Caco-2 (cell line): ENCODE measurements at regions of chr19 and their contacts with region 1.

Region 1: DNA sequence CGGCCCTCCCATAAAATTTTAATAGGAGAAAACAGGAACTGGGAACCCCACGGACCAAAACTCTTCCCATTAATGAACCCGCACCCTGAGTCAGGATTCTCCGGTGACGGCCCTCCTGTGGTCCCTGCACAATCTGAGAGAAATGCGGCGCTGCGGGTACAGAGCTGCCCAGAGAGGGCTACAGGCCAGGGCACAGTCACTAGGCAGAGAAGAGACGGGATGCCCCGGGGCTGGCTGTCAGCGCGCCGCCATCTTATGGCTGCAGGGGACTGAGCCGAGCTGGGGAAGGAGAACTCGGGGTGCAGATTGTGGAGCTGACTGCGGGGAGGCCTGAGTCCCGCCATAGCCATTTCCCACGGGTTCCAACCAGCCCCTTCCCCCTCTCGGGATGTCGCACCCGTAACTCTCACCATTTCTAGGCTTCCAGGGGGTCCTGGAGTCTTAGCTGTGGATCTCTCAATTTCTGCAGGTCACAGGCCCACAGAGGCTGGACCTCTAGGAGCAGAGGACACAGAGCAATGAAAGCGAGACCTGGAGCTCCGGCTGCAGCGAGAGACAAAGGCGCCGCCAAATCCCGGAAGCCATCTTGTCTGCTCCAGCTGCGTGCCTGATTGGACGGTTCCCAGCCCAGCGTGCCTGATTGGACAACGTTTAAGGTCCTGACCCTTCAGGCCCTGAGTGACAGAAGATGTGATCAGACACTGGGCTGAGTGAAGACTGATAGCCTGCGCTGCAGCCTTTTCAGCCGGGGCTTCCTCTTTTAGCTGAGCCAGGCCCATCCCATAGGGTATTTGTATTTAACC is at the start of gene ZNF675:
- DNase-seq: peak; percentile 88 to 93
- H3K4me3 ChIP-seq: peak within 1 kb of the TSS; percentile 94
- H3K4me3 Mint-ChIP-seq: peak within 1 kb of the TSS; percentile 96
- H3K27ac Mint-ChIP-seq: peak within 1 kb of the TSS; percentile 97
- H3K4me1 ChIP-seq: 0 out of 2 replicates have a peak, but pooled peaks cover 3% of the 10 kb centered on the region
- H3K4me1 Mint-ChIP-seq: no peaks in the 10 kb centered on the region
- H3K27me3 ChIP-seq: no peaks in the 10 kb centered on the region
- H3K27me3 Mint-ChIP-seq: no peaks in the 10 kb centered on the region
- CTCF ChIP-seq: no peak
- total RNA-seq, gene ZNF675: 10.7 and 12.9 TPM in 2 replicates

Region 2: DNA sequence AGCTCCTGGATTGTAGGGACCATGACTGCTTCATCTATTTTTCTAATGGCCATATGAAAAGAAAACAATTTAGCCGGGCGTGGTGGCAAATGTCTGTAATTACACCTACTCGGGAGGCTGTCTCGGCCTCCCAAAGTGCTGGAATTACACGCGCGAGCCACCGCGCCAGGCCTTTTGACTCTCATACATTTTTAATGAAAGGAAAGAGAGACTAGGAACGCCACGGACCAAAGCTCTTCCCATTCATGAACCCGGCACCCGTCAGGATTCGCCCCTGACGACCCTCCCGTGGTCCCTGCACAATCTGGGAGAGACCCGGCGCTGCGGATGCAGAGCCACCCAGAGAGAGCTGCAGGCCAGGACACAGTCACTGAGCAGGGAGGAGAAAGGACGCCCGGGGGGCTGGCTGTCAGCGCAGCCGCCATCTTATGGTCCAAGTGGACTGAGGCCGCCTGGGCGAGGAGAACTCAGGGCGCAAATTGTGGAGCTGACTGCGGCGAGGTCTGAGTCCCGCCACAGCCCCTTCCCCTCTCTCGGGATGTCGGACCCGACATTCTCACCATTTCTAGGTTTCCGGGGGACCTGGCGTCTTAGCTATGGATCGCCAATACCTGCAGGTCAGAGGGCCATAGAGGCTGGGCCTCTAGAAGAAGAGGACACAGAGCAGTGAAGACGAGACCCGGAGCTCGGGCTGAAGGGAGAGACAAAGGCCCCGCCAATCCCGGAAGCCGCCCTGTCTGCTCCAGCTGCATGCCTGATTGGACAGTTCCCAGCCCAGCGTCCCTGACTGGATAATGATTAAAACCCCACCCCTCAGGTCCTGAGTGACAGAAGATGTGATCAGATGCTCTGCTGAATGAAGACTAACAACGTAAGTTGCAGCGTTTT is 71.6 kb after region 1 on chr19 and contains the start of gene ZNF681:
- CTCF ChIA-PET with region 1: no interaction called
- POLR2A ChIA-PET with region 1: interaction called, 4 read pairs
- intact Hi-C with region 1: loop called (anchors 1 kb)
- DNase-seq: peak; percentile 68 to 87
- H3K4me3 ChIP-seq: peak within 1 kb of the TSS; percentile 59
- H3K4me3 Mint-ChIP-seq: peak within 1 kb of the TSS; percentile 74
- H3K27ac Mint-ChIP-seq: no peak within 1 kb of the TSS
- H3K4me1 ChIP-seq: no peaks in the 10 kb centered on the region
- H3K4me1 Mint-ChIP-seq: no peaks in the 10 kb centered on the region
- H3K27me3 ChIP-seq: no peaks in the 10 kb centered on the region
- H3K27me3 Mint-ChIP-seq: no peaks in the 10 kb centered on the region
- CTCF ChIP-seq: no peak
- total RNA-seq, gene ZNF681: 1.2 TPM in 2 replicates

Region 3: GRCh38 chr19:24101459-24102115 is 414.8 kb after region 1 on chr19:
- CTCF ChIA-PET with region 1: no interaction called
- POLR2A ChIA-PET with region 1: no interaction called
- intact Hi-C with region 1: no loop called
- DNase-seq: no peak
- H3K4me3 ChIP-seq: no peak overlapping the region
- H3K4me3 Mint-ChIP-seq: no peak overlapping the region
- H3K27ac Mint-ChIP-seq: no peak overlapping the region
- H3K4me1 ChIP-seq: no peaks in the 10 kb centered on the region; the same call in 1 of the 2 replicates
- H3K4me1 Mint-ChIP-seq: no peaks in the 10 kb centered on the region
- H3K27me3 ChIP-seq: no peaks in the 10 kb centered on the region
- H3K27me3 Mint-ChIP-seq: no peaks in the 10 kb centered on the region
- CTCF ChIP-seq: no peak